Endothelial cell of umbilical vein (primary cell): ENCODE measurements at regions of chr2 and their contacts with region 1.

Region 1: GRCh38 chr2:178414266-178415247 is 36.4 kb downstream of the PRKRA start:
- DNase-seq: peak; percentile 94
- H3K4me3 ChIP-seq: peak overlapping the region; percentile 49 to 91 (median 69)
- H3K27ac ChIP-seq: peak overlapping the region; percentile 91
- H3K4me1 ChIP-seq: peaks cover 13% of the 10 kb centered on the region
- H3K27me3 ChIP-seq: no peaks in the 10 kb centered on the region
- CTCF ChIP-seq: peak; percentile 90 to 94
- POLR2A ChIP-seq: peak; percentile 86

Region 2: GRCh38 chr2:177724398-177725287 is 689.9 kb before region 1 on chr2:
- CTCF ChIA-PET with region 1: no interaction called
- POLR2A ChIA-PET with region 1: no interaction called
- dilution Hi-C with region 1: no loop called
- intact Hi-C with region 1: no loop called
- DNase-seq: peak; percentile 89
- H3K4me3 ChIP-seq: peak overlapping the region in 1 of 3 experiments; percentile 9
- H3K27ac ChIP-seq: peak overlapping the region; percentile 62
- H3K4me1 ChIP-seq: peaks cover 13% of the 10 kb centered on the region
- H3K27me3 ChIP-seq: no peaks in the 10 kb centered on the region
- CTCF ChIP-seq: peak; percentile 84 to 94
- POLR2A ChIP-seq: no peak

Region 3: GRCh38 chr2:178025551-178026185 is 388.9 kb before region 1 on chr2:
- CTCF ChIA-PET with region 1: no interaction called
- POLR2A ChIA-PET with region 1: no interaction called
- dilution Hi-C with region 1: no loop called
- intact Hi-C with region 1: no loop called
- DNase-seq: no peak
- H3K4me3 ChIP-seq: no peak overlapping the region
- H3K27ac ChIP-seq: no peak overlapping the region
- H3K4me1 ChIP-seq: no peaks in the 10 kb centered on the region
- H3K27me3 ChIP-seq: no peaks in the 10 kb centered on the region
- CTCF ChIP-seq: no peak
- POLR2A ChIP-seq: no peak

Region 4: DNA sequence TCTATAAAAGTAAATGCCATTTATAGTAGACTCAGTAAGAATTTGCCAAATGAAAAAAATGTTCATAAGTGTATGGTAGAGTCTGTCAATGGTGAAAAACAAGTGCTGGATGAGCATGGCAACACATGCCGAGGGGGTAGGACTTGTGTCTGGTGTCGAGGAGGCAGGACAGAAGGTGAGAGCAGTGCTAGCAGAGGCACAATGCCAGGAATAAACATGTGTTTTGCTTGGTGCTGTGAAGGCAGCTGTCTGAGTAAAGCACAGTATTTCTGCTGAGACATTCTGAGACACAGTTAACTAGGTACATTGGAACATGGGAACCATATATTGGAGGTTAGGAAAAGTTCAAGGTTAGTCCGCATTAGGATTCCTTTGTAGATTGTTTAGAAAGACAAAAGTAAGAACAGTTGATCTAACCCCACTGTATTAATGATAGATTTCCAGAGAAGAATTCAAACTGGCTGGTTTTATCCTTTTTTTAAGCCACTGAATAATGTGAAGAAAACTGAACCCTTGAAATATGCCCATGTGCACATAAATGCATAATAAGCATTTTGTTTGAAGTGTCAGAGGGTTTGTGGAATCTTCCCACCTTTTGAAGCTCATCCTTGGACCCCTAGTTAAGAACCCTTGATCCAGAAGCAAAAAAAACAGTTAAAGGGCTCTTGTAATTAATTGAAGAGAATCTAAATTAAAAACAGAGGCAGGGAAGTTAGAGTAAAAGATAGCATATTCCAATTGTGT is 295.2 kb before region 1 on chr2:
- CTCF ChIA-PET with region 1: interaction called, 12 read pairs
- POLR2A ChIA-PET with region 1: no interaction called
- dilution Hi-C with region 1: no loop called
- intact Hi-C with region 1: no loop called
- DNase-seq: no peak
- H3K4me3 ChIP-seq: no peak overlapping the region
- H3K27ac ChIP-seq: no peak overlapping the region
- H3K4me1 ChIP-seq: no peaks in the 10 kb centered on the region
- H3K27me3 ChIP-seq: no peaks in the 10 kb centered on the region
- CTCF ChIP-seq: no peak
- POLR2A ChIP-seq: no peak

Region 5: GRCh38 chr2:178193823-178194599 is 220.5 kb before region 1 on chr2 and contains the start of gene OSBPL6:
- CTCF ChIA-PET with region 1: interaction called, 9 read pairs
- POLR2A ChIA-PET with region 1: no interaction called
- dilution Hi-C with region 1: no loop called
- intact Hi-C with region 1: loop called (anchors 1 kb)
- DNase-seq: peak; percentile 88
- H3K4me3 ChIP-seq: peak within 1 kb of the TSS; percentile 48 to 79 (median 73)
- H3K27ac ChIP-seq: no peak within 1 kb of the TSS
- H3K4me1 ChIP-seq: peaks cover 8% of the 10 kb centered on the region
- H3K27me3 ChIP-seq: peaks cover 11% of the 10 kb centered on the region in 2 experiments
- CTCF ChIP-seq: peak in 1 of 2 donors; percentile 22
- POLR2A ChIP-seq: peak; percentile 51
- total RNA-seq, gene OSBPL6: 2.3 TPM in 2 replicates

Region 6: GRCh38 chr2:178306352-178307073 is 108.0 kb before region 1 on chr2:
- CTCF ChIA-PET with region 1: interaction called, 21 read pairs
- POLR2A ChIA-PET with region 1: no interaction called
- dilution Hi-C with region 1: no loop called
- intact Hi-C with region 1: loop called (anchors 1 kb)
- DNase-seq: peak; percentile 65
- H3K4me3 ChIP-seq: no peak overlapping the region
- H3K27ac ChIP-seq: no peak overlapping the region
- H3K4me1 ChIP-seq: no peaks in the 10 kb centered on the region
- H3K27me3 ChIP-seq: no peaks in the 10 kb centered on the region
- CTCF ChIP-seq: peak; percentile 50 to 74
- POLR2A ChIP-seq: no peak

Region 7: DNA sequence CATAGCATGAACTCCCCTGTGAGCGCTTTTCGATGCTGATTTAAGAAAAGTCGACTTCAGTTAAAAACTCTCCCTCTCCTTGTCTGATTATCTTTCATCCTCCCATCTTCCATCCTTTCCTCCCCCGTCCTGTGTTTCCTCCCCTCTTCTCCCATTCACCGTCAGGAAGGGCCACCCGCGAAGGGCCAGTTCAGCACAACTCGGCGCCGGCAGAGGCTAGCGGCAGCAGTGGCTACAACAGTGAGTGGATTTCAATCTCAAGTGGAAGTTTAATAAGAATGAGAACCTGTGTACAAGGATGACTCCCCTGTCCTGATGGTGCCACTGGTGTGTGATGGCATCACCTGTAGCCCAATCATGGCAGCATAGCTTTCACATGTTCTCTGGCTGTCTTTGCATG is 70.4 kb before region 1 on chr2:
- CTCF ChIA-PET with region 1: no interaction called
- POLR2A ChIA-PET with region 1: no interaction called
- dilution Hi-C with region 1: no loop called
- intact Hi-C with region 1: no loop called
- DNase-seq: no peak
- H3K4me3 ChIP-seq: no peak overlapping the region
- H3K27ac ChIP-seq: no peak overlapping the region
- H3K4me1 ChIP-seq: no peaks in the 10 kb centered on the region
- H3K27me3 ChIP-seq: no peaks in the 10 kb centered on the region
- CTCF ChIP-seq: no peak
- POLR2A ChIP-seq: no peak

Region 8: GRCh38 chr2:178426388-178426787 is 11.8 kb after region 1 on chr2:
- CTCF ChIA-PET with region 1: interaction called, 18 read pairs
- POLR2A ChIA-PET with region 1: interaction called, 3 read pairs
- dilution Hi-C with region 1: no loop called
- intact Hi-C with region 1: no loop called
- DNase-seq: no peak
- H3K4me3 ChIP-seq: no peak overlapping the region
- H3K27ac ChIP-seq: no peak overlapping the region
- H3K4me1 ChIP-seq: no peaks in the 10 kb centered on the region
- H3K27me3 ChIP-seq: no peaks in the 10 kb centered on the region
- CTCF ChIP-seq: no peak
- POLR2A ChIP-seq: no peak